ENCODE measurements at regions of chr19 and their contacts with region 1.

Region 1: DNA sequence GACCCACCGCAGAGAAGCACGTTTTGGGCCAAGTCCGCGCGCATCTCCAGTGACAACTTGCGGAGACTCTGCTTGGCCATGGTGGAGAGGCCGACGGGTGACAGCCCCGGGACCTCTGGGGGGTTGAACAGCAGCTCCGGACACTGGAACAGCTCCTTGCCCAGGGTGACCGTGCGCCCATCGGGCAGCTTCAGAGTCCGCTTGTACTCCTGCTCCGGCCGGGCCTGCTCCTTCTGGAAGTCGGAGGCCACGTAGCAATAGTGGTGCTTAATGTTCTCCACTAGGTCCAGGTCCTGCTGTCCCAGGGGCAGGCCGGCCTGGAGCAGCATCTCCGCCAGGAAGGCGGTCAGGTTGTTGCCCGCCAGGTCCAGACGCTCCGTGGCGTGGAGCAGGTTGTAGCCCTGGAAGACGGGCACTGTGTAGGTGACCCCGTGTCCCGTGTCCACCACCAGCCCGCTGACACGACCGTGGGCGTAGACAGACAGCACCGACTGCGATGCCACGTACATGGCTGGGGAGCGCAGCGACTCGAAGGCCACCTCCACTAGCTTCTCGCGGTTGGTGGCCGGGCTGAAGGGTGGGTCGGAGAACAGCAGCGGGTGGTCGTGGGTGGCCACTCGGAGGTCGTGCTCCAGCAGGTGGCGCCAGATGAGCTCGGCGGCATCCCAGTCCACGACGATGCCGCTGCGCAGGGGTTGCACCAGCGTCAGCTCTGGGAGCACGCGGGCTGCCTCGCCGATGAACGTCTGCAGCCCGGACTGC is 743 bp downstream of the ACTL9 start:
- DNase-seq: peak; percentile 31
- ATAC-seq: no peak
- H3K4me3 Mint-ChIP-seq: no peak overlapping the region
- H3K27ac Mint-ChIP-seq: no peak overlapping the region
- H3K4me1 Mint-ChIP-seq: peaks cover 68% of the 10 kb centered on the region
- H3K27me3 Mint-ChIP-seq: peaks cover 22% of the 10 kb centered on the region

Region 2: GRCh38 chr19:8609279-8610040 is 88.4 kb before region 1 on chr19:
- CTCF ChIA-PET with region 1: no interaction called
- POLR2A ChIA-PET with region 1: no interaction called
- DNase-seq: no peak
- ATAC-seq: peak; percentile 40
- H3K4me3 Mint-ChIP-seq: peak overlapping the region; percentile 72
- H3K27ac Mint-ChIP-seq: peak overlapping the region; percentile 51
- H3K4me1 Mint-ChIP-seq: peaks cover 21% of the 10 kb centered on the region
- H3K27me3 Mint-ChIP-seq: peaks cover 11% of the 10 kb centered on the region

Region 3: DNA sequence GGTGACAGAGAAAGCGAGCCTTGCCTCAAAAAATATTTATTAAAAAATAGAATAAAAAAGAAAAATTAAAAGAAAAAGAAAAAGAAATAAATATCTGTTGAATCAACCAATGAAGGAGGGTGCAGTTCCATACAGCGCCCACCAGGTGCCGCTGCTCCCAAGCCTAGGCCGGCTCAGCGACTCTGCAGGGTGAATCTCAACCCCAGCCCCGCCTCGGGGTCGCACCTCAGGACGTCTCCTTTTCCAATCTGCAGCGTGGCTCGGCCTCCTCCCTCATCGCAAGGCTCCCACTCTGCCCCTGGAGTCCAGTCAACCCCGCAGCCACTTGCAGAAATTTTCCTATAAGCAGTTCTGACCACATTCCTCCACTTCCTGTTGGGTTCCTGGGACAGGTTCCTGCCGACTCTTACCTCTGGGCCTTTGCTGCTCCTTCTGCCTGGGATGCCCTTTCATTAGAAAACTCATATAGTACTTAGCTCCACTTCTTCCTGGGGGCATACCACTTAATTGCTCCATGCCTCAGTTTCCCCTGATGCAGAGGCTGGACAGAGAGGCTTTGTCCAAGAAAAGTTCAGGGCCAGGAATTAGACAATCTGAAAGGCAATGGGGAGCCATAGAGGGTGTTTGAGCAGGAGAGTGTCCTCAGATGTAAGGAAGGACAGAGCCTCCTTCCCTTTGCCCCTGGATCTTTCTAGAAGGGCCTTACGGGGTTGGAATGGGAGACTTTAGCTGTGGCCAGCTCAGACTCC is 43.1 kb before region 1 on chr19:
- CTCF ChIA-PET with region 1: interaction called, 129 read pairs
- POLR2A ChIA-PET with region 1: interaction called, 9 read pairs
- DNase-seq: peak; percentile 80
- ATAC-seq: peak; percentile 70
- H3K4me3 Mint-ChIP-seq: peak overlapping the region; percentile 55
- H3K27ac Mint-ChIP-seq: peak overlapping the region; percentile 66
- H3K4me1 Mint-ChIP-seq: peaks cover 32% of the 10 kb centered on the region
- H3K27me3 Mint-ChIP-seq: peaks cover 24% of the 10 kb centered on the region

Region 4: GRCh38 chr19:8663920-8664670 is 33.8 kb before region 1 on chr19:
- CTCF ChIA-PET with region 1: interaction called, 27 read pairs
- POLR2A ChIA-PET with region 1: no interaction called
- DNase-seq: peak; percentile 70
- ATAC-seq: peak; percentile 31
- H3K4me3 Mint-ChIP-seq: peak overlapping the region; percentile 38
- H3K27ac Mint-ChIP-seq: peak overlapping the region; percentile 83
- H3K4me1 Mint-ChIP-seq: peaks cover 70% of the 10 kb centered on the region
- H3K27me3 Mint-ChIP-seq: peaks cover 10% of the 10 kb centered on the region

Measured in activated CD8-positive, alpha-beta T cell treated with anti-CD3 and anti-CD28 coated beads, Interleukin-2, amount 10 ng/mL, durations not matched to agents 7 days and 5 days (primary cell).